Activated CD4-positive, alpha-beta T cell treated with anti-CD3 and anti-CD28 coated beads for 36 hours (primary cell): ENCODE measurements at regions of chr1 and their contacts with region 1.

Region 1: DNA sequence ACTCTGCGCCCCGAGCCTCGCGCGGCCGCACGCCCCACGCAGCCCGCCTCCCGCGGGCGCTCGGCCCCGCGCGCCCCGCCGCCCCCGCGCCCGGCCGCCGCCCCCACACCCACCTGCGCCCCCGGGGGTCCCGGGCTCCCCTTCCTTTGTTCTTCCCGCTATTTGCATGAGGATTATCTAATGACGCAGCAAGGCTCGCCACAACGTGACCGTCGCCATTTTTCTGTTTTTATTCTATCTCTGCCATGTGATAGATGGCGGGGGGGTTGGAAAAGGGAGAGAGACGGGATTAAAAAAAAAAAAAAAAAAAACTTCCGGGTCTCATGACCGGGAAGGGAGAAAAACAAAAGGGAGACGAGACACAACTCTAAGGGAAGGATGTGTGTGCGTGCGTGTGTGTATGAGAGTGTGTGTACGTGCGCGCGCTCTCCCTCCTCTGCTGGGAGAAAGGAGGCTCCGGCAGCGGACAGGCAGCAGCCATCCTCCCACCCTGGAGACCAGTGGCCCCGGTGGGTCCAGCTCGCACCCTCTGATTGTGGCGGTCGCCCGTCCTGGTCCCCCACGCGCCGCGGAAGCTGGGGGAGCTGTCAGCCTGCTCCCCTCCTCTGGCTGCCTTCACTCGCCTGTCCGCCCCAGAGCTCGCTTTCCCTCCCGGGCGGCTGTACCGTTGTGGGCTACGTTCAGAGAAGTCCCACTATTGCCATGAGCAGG is 80.4 kb upstream of the AK4 start:
- DNase-seq: peak; percentile 70
- ATAC-seq: peak; percentile 27
- H3K4me3 Mint-ChIP-seq: peak overlapping the region; percentile 93
- H3K27ac Mint-ChIP-seq: peak overlapping the region; percentile 95
- H3K4me1 Mint-ChIP-seq: peaks cover 52% of the 10 kb centered on the region
- H3K27me3 Mint-ChIP-seq: no peaks in the 10 kb centered on the region

Region 2: DNA sequence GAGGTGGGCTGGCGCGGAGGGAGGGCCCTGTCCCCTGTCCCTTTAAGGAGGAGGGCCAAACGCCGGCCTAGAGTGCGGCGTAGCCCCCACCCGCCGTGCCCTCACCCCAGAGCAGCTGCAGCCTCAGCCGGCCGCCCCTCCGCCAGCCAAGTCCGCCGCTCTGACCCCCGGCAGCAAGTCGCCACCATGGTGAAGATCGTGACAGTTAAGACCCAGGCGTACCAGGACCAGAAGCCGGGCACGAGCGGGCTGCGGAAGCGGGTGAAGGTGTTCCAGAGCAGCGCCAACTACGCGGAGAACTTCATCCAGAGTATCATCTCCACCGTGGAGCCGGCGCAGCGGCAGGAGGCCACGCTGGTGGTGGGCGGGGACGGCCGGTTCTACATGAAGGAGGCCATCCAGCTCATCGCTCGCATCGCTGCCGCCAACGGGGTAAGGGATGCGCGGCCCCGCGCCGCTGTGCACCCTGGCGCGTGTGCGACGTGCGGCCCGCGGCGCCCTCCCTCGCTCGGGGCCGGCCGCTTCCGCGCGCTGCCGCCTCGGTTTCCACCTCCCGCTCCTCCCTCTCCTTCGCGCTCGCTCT is 1474.3 kb before region 1 on chr1 and contains the start of gene PGM1:
- CTCF ChIA-PET with region 1: no interaction called
- POLR2A ChIA-PET with region 1: no interaction called
- intact Hi-C with region 1: loop called in 1 of 2 experiments (anchors 10 kb)
- DNase-seq: peak; percentile 89
- ATAC-seq: peak; percentile 85
- H3K4me3 Mint-ChIP-seq: peak within 1 kb of the TSS; percentile 97
- H3K27ac Mint-ChIP-seq: peak within 1 kb of the TSS; percentile 96
- H3K4me1 Mint-ChIP-seq: peaks cover 27% of the 10 kb centered on the region
- H3K27me3 Mint-ChIP-seq: no peaks in the 10 kb centered on the region
- total RNA-seq, gene PGM1: 38.8 to 43.8 TPM

Region 3: GRCh38 chr1:64440183-64440826 is 627.3 kb before region 1 on chr1:
- CTCF ChIA-PET with region 1: no interaction called
- POLR2A ChIA-PET with region 1: no interaction called
- intact Hi-C with region 1: no loop called
- DNase-seq: no peak
- ATAC-seq: no peak
- H3K4me3 Mint-ChIP-seq: no peak overlapping the region
- H3K27ac Mint-ChIP-seq: no peak overlapping the region
- H3K4me1 Mint-ChIP-seq: no peaks in the 10 kb centered on the region
- H3K27me3 Mint-ChIP-seq: no peaks in the 10 kb centered on the region

Region 4: DNA sequence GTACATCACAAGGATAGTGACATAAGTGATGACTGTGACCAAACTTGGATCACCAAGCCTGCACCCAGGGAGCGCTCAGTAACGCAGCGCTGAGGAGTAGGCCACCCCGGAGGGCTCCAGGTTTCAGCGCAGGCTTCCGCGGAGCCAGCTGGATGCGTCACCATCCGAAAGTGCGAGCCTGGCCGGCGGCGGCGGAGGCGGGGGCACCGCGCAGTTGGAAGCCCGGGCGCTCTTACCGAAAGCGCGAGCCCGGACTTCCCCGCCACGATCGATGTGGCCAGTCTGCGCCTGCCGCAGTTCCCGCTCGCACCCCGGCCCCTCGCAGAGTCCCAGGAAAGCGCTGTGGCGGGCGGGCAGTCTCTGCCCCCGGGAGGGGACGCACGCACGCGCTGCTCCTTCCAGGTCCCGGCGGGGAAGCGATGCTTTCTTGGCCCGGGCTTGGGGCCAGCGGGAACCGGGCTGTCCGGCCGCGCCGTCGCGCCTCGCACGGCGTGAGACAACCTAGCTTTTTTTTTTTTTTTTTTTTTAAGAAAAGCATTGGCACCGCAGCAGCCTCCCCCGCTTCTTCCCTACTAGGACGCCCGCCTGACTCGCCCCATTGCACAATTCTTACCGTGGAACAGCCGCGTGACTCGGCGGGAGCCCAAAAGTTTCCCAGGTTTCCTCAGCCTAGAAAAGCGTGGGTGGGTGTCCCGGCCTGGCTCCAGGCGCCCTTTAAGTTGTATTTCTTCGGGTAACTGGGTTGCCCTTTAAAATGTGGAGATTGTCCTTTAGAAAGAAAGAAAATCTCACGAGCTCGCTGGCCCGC is 64.9 kb before region 1 on chr1:
- CTCF ChIA-PET with region 1: no interaction called
- POLR2A ChIA-PET with region 1: interaction called, 8 read pairs
- intact Hi-C with region 1: loop called (anchors 1 to 5 kb)
- DNase-seq: peak; percentile 86
- ATAC-seq: peak; percentile 85
- H3K4me3 Mint-ChIP-seq: peak overlapping the region; percentile 70
- H3K27ac Mint-ChIP-seq: peak overlapping the region; percentile 87
- H3K4me1 Mint-ChIP-seq: peaks cover 28% of the 10 kb centered on the region
- H3K27me3 Mint-ChIP-seq: no peaks in the 10 kb centered on the region

Region 5: GRCh38 chr1:65174585-65174984 is 106.9 kb after region 1 on chr1:
- CTCF ChIA-PET with region 1: no interaction called
- POLR2A ChIA-PET with region 1: no interaction called
- intact Hi-C with region 1: no loop called
- DNase-seq: no peak
- ATAC-seq: no peak
- H3K4me3 Mint-ChIP-seq: no peak overlapping the region
- H3K27ac Mint-ChIP-seq: no peak overlapping the region
- H3K4me1 Mint-ChIP-seq: no peaks in the 10 kb centered on the region
- H3K27me3 Mint-ChIP-seq: no peaks in the 10 kb centered on the region

Region 6: GRCh38 chr1:65209005-65209885 is 141.6 kb after region 1 on chr1:
- CTCF ChIA-PET with region 1: interaction called, 7 read pairs
- POLR2A ChIA-PET with region 1: no interaction called
- intact Hi-C with region 1: loop called (anchors 2 to 5 kb)
- DNase-seq: peak; percentile 20
- ATAC-seq: no peak
- H3K4me3 Mint-ChIP-seq: no peak overlapping the region
- H3K27ac Mint-ChIP-seq: no peak overlapping the region
- H3K4me1 Mint-ChIP-seq: peaks cover 25% of the 10 kb centered on the region
- H3K27me3 Mint-ChIP-seq: peaks cover 4% of the 10 kb centered on the region

Region 7: GRCh38 chr1:65419681-65420589 is 352.3 kb after region 1 on chr1:
- CTCF ChIA-PET with region 1: no interaction called
- POLR2A ChIA-PET with region 1: no interaction called
- intact Hi-C with region 1: loop called (anchors 1 to 5 kb)
- DNase-seq: peak; percentile 99
- ATAC-seq: peak; percentile 96
- H3K4me3 Mint-ChIP-seq: no peak overlapping the region
- H3K27ac Mint-ChIP-seq: peak overlapping the region; percentile 94
- H3K4me1 Mint-ChIP-seq: peaks cover 13% of the 10 kb centered on the region
- H3K27me3 Mint-ChIP-seq: no peaks in the 10 kb centered on the region

Region 8: GRCh38 chr1:65615859-65616258 is 548.2 kb after region 1 on chr1:
- CTCF ChIA-PET with region 1: no interaction called
- POLR2A ChIA-PET with region 1: no interaction called
- intact Hi-C with region 1: no loop called
- DNase-seq: no peak
- ATAC-seq: no peak
- H3K4me3 Mint-ChIP-seq: no peak overlapping the region
- H3K27ac Mint-ChIP-seq: no peak overlapping the region
- H3K4me1 Mint-ChIP-seq: peaks cover 7% of the 10 kb centered on the region
- H3K27me3 Mint-ChIP-seq: no peaks in the 10 kb centered on the region